ENCODE measurements at regions of chr3 and their contacts with region 1.

Region 1: GRCh38 chr3:10263646-10264363 is 15.5 kb downstream of the TATDN2 start:
- DNase-seq: peak; percentile 36 to 83 (median 64)
- ATAC-seq: peak; percentile 93
- H3K4me3 ChIP-seq: peak overlapping the region; percentile 41
- H3K4me3 Mint-ChIP-seq: peak overlapping the region; percentile 60
- H3K27ac ChIP-seq: peak overlapping the region; percentile 64 to 79
- H3K27ac Mint-ChIP-seq: peak overlapping the region; percentile 87
- H3K4me1 ChIP-seq: peaks cover 63% of the 10 kb centered on the region
- H3K4me1 Mint-ChIP-seq: peaks cover 86% of the 10 kb centered on the region
- H3K27me3 ChIP-seq: no peaks in the 10 kb centered on the region
- H3K27me3 Mint-ChIP-seq: no peaks in the 10 kb centered on the region
- CTCF ChIP-seq: peak; percentile 68

Region 2: DNA sequence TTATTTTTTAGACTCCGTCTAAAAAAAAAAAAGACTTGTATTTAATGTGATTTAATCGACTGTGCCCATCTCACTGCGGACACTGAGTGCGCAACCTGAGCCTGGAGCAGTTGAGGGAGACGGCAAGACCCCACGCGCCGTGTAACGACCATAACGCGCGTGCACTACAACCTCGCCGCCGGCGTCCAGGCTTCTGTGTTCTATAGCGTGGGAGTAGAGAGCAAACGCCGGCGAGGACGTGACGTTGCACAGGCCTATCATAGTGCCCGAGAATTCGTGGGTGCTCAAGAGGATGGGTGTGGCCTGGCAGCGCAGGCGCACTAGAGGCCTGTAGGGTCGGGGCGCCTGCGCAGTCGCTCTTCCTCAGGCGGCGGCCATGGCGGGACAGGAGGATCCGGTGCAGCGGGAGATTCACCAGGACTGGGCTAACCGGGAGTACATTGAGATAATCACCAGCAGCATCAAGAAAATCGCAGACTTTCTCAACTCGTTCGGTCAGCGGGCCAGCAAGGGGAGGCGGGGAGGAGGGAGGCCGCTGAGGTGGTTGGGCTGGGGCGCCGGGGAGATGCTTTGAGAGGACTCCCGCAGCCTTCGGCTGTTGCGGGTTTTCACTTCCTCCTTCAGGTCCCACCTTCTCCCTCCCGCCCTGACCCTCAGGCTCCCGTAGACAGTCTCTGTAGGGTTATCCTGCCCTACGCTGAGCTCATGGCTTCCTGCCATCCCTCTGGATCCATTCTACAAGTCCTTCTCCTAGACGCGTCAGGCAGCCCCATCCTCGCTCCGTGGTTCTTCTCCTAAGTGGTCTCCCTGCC is 148.3 kb before region 1 on chr3 and contains the start of gene BRK1:
- CTCF ChIA-PET with region 1: interaction called, 4 read pairs
- POLR2A ChIA-PET with region 1: no interaction called
- intact Hi-C with region 1: loop called in 1 of 2 experiments (anchors 10 kb)
- DNase-seq: peak; percentile 83 to 98 (median 92)
- ATAC-seq: peak; percentile 97
- H3K4me3 ChIP-seq: peak within 1 kb of the TSS; percentile 98
- H3K4me3 Mint-ChIP-seq: peak within 1 kb of the TSS; percentile 95
- H3K27ac ChIP-seq: peak within 1 kb of the TSS; percentile 64 to 74
- H3K27ac Mint-ChIP-seq: peak within 1 kb of the TSS; percentile 88
- H3K4me1 ChIP-seq: peaks cover 41% of the 10 kb centered on the region
- H3K4me1 Mint-ChIP-seq: peaks cover 36% of the 10 kb centered on the region
- H3K27me3 ChIP-seq: no peaks in the 10 kb centered on the region
- H3K27me3 Mint-ChIP-seq: no peaks in the 10 kb centered on the region
- CTCF ChIP-seq: no peak
- total RNA-seq, gene BRK1: 33.1 to 33.8 TPM

Region 3: DNA sequence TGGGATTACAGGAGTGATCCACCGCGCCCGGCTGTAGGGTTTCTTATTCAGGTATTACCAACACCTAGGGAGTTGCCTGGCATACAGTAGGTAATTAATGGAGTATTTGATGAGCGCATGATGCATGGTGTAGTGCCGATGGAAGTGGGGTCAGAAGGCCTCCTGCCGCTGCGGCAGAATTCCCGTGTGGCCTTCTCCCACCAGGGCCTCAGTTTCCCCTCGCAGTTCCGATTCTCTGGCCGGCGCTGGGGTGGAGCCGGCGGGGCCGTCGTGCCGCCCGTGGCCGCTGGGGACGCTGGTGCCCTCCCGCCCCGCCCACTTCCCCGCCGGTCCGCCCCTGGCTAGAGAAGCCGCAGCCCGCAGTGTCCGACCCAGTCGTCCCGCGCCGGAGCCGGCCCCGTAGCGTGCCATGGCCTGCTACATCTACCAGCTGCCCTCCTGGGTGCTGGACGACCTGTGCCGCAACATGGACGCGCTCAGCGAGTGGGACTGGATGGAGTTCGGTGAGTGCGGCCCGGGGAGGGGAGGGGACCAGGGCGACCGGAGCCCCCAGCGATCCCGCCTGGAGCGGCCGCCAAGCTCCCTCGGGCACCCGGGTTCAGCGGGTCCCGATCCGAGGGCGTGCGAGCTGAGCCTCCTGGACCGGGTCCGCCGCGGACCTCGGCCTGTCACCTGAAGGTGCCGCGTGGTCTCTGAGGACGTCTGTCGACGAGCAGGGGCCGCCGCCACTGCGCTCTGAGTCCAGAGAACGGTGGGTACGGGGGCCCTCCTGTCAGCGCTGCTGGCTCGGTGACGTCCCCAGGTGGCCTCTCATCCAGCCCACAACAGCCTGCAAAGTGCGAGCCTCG is 99.0 kb before region 1 on chr3 and contains the start of gene IRAK2:
- CTCF ChIA-PET with region 1: interaction called, 7 read pairs
- POLR2A ChIA-PET with region 1: interaction called, 4 read pairs
- intact Hi-C with region 1: loop called in 1 of 2 experiments (anchors 1 kb)
- DNase-seq: peak in 13 of 14 experiments; percentile 33 to 84 (median 48)
- ATAC-seq: peak; percentile 80
- H3K4me3 ChIP-seq: peak within 1 kb of the TSS; percentile 72
- H3K4me3 Mint-ChIP-seq: peak within 1 kb of the TSS; percentile 88
- H3K27ac ChIP-seq: peak within 1 kb of the TSS in 1 of 2 donors; percentile 50
- H3K27ac Mint-ChIP-seq: peak within 1 kb of the TSS; percentile 12
- H3K4me1 ChIP-seq: peaks cover 23% of the 10 kb centered on the region
- H3K4me1 Mint-ChIP-seq: peaks cover 28% of the 10 kb centered on the region
- H3K27me3 ChIP-seq: no peaks in the 10 kb centered on the region
- H3K27me3 Mint-ChIP-seq: no peaks in the 10 kb centered on the region
- CTCF ChIP-seq: peak; percentile 95
- total RNA-seq, gene IRAK2: 1.4 to 1.6 TPM

Region 4: DNA sequence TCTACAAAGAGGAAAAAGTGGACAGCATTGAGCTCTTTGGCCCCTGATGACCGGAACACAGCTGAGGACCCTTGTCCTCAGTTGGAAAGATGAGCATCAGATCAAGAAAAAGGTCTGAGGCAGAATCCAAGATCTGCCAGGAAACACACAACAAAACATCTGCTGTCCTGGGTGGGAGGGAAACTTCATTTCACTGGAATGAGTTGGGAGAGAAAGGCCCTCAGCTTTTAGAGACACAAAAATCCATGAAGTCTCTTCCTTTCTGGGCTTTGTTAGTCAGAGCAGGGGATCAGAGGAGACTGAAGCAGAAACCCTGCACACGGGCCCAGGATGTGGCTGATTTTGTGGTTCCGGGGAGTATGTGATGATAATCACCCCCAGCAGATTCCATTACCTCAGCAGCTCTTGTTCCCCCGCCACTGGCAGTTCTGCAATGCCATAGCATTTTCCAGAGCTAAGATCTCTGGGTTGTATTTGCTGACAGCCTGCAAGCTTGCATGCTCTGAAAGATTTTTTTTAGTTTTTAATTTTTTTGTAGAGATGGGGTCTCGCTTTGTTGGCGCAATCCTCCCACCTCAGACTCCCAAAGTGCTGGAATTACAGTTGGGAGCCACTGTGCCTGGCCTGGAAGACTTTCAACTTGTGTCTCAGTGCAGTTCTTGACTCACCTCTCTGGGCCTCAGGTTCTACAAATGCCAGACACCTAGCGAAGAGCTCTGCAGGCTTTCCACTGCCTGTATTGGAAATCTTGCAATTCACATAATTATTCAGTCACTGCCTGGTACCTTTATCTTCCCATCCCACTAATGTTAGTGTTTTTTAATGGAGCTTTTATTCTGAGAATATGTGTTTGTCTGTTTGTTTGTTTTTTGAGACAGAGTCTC is 21.4 kb before region 1 on chr3:
- CTCF ChIA-PET with region 1: interaction called, 26 read pairs
- POLR2A ChIA-PET with region 1: interaction called, 85 read pairs
- intact Hi-C with region 1: loop called in 1 of 2 experiments (anchors 1 kb)
- DNase-seq: peak; percentile 42 to 94 (median 68)
- ATAC-seq: peak; percentile 94
- H3K4me3 ChIP-seq: peak overlapping the region; percentile 6
- H3K4me3 Mint-ChIP-seq: peak overlapping the region; percentile 77
- H3K27ac ChIP-seq: peak overlapping the region; percentile 41 to 63
- H3K27ac Mint-ChIP-seq: peak overlapping the region; percentile 91
- H3K4me1 ChIP-seq: peaks cover 59% of the 10 kb centered on the region
- H3K4me1 Mint-ChIP-seq: peaks cover 62% of the 10 kb centered on the region
- H3K27me3 ChIP-seq: no peaks in the 10 kb centered on the region
- H3K27me3 Mint-ChIP-seq: no peaks in the 10 kb centered on the region
- CTCF ChIP-seq: no peak

Region 5: DNA sequence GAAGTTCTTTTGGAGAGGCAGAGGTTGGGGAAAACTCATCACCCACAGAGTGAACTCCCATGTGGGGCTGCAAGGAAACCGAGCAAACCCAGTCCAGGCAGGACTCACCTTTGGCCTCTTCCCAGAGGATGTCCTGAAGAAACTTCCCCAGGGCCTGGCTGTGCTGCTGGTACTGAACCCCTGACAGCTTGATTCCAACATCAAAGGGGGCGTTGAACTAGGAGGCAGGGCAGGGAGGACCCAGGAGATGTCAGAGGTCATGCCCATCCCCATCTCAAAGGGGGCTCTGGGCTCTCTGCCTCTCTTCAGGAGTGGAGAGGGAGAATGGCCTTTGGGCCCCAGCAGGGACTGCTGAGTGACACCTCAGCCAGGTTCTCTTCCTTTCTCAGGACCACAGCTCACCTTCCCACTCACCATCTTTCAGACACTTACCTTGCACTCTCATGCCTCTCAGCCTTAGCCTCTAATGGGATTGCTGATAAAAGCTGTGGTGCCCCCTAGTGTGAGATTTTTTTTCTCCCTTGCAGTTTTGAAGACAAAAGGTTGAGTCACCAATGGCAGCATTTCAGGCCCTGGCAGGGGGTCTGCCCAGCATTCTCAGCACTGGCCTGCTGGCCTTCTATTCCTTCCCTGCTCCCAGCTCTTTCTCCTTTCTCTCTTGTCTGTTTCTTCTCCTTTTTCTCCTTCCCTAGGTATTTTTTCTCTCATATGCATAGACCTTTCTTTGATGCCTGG is 23.0 kb after region 1 on chr3:
- CTCF ChIA-PET with region 1: interaction called, 18 read pairs
- POLR2A ChIA-PET with region 1: interaction called, 10 read pairs
- intact Hi-C with region 1: no loop called
- DNase-seq: peak in 5 of 14 experiments; percentile 28 to 71 (median 61)
- ATAC-seq: peak; percentile 39
- H3K4me3 ChIP-seq: no peak overlapping the region
- H3K4me3 Mint-ChIP-seq: no peak overlapping the region
- H3K27ac ChIP-seq: peak overlapping the region in 1 of 2 donors; percentile 21
- H3K27ac Mint-ChIP-seq: peak overlapping the region; percentile 50
- H3K4me1 ChIP-seq: peaks cover 19% of the 10 kb centered on the region
- H3K4me1 Mint-ChIP-seq: peaks cover 39% of the 10 kb centered on the region
- H3K27me3 ChIP-seq: no peaks in the 10 kb centered on the region
- H3K27me3 Mint-ChIP-seq: no peaks in the 10 kb centered on the region
- CTCF ChIP-seq: peak; percentile 52

Region 6: GRCh38 chr3:10518506-10519150 is 254.8 kb after region 1 on chr3:
- CTCF ChIA-PET with region 1: no interaction called
- POLR2A ChIA-PET with region 1: no interaction called
- intact Hi-C with region 1: no loop called
- DNase-seq: peak in 1 of 14 experiments; percentile 7
- ATAC-seq: no peak
- H3K4me3 ChIP-seq: no peak overlapping the region
- H3K4me3 Mint-ChIP-seq: no peak overlapping the region
- H3K27ac ChIP-seq: no peak overlapping the region
- H3K27ac Mint-ChIP-seq: no peak overlapping the region
- H3K4me1 ChIP-seq: no peaks in the 10 kb centered on the region
- H3K4me1 Mint-ChIP-seq: no peaks in the 10 kb centered on the region
- H3K27me3 ChIP-seq: peaks cover 0 to 6% of the 10 kb centered on the region in 2 experiments
- H3K27me3 Mint-ChIP-seq: peaks cover 14% of the 10 kb centered on the region
- CTCF ChIP-seq: no peak